Aorta (tissue), 5 donors: ENCODE measurements at regions of chr16 and their contacts with region 1.

Region 1: GRCh38 chr16:78990309-78990701 is 610.2 kb downstream of the MAF start:
- DNase-seq: no peak
- ATAC-seq: no peak
- H3K4me3 ChIP-seq: no peak overlapping the region
- H3K27ac ChIP-seq: no peak overlapping the region
- H3K4me1 ChIP-seq: no peaks in the 10 kb centered on the region
- H3K27me3 ChIP-seq: no peaks in the 10 kb centered on the region

Region 2: DNA sequence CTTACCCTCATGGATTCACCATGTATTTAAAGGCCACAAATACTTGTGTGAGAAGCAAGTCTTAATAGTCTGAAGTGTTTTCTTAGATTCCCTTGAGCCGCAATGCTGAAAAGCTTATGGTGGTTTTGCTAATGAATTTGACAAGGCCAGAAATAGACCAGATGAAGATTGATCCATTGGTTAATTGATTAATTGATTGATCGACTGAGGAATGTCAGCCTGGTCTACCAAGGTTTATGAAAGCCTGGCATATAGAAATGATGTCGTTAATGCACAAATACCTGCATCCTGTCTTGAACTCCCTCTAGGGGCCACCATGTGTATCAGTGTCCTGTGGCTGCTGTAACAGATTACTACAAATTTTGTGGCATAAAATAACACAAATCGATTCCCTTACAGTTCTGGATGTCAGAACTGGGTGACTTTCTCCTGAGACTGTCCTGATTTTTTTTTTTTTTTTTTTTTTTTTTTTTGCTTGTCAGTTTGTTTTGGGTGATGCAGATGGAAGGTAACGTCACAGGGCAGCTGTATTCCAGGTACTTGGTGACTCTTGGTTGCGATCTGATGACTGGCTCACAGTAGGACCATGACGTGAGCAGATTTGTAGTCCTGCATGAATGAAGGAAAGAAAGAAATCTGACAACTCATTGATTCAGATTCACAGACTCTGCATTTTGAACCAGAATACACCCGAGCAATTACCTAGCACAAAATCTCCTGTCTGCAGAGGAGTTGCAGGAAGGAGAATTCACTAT is 57.1 kb after region 1 on chr16:
- intact Hi-C with region 1: loop called in 1 of 2 experiments (anchors 10 kb)
- DNase-seq: no peak
- ATAC-seq: no peak
- H3K4me3 ChIP-seq: no peak overlapping the region
- H3K27ac ChIP-seq: no peak overlapping the region
- H3K4me1 ChIP-seq: no peaks in the 10 kb centered on the region
- H3K27me3 ChIP-seq: no peaks in the 10 kb centered on the region